ENCODE measurements at regions of chr16 and their contacts with region 1.

Region 1: DNA sequence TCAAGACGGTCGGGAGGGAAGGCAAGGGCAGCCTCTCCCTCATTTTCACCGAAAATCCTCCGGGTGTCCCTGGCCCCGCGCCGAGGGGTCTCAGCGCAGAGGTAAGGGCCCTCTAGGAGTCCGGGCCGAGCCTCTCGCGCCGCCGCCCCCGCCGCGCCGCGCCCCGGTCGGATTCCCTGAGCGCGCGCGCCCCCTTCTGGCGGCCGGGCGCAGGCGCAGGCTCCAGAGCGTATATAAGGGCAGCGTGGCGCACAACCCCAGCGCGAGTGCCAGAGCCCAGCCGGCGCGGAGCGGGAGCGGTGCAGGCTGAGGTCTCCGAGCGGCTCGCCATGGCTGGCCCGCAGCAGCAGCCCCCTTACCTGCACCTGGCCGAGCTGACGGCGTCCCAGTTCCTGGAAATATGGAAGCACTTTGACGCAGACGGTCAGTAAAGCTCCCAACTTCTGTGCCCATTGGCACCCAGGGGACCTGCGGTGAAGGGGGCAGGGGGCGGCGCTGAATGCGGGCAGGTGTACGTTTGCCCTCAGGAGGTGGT is at the start of gene CALB2:
- DNase-seq: peak; percentile 85
- CTCF ChIP-seq: peak; percentile 98

Region 2: GRCh38 chr16:71328151-71328550 is 30.4 kb before region 1 on chr16:
- CTCF ChIA-PET with region 1: no interaction called
- POLR2A ChIA-PET with region 1: no interaction called
- DNase-seq: no peak
- CTCF ChIP-seq: no peak

Region 3: GRCh38 chr16:71348262-71349085 is 10.1 kb before region 1 on chr16:
- CTCF ChIA-PET with region 1: interaction called, 12 read pairs
- POLR2A ChIA-PET with region 1: no interaction called
- DNase-seq: no peak
- CTCF ChIP-seq: no peak

Region 4: DNA sequence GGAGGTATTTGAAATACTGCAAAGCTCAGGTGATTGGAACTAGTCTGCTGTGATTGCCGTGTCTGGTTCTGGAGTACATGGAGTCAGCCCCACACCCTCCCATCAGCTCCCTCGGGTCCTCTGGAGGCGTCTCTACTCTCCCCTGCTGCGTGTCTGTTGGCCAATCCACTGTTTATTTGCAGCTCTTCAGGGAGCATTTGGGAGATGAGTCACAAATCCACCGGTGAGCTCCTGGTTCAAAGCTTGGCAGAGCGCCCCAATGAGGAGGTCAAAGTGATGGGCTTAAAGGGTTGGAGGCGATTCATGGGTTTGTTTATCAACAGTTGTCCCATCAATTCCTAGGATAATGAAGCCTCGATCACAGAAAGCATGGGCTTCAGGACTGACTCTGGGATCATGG is 14.5 kb after region 1 on chr16:
- CTCF ChIA-PET with region 1: interaction called, 20 read pairs
- POLR2A ChIA-PET with region 1: no interaction called
- DNase-seq: no peak
- CTCF ChIP-seq: no peak

Measured in GM10248 (cell line).